CD4-positive, alpha-beta memory T cell (primary cell): ENCODE measurements at regions of chr6 and their contacts with region 1.

Region 1: DNA sequence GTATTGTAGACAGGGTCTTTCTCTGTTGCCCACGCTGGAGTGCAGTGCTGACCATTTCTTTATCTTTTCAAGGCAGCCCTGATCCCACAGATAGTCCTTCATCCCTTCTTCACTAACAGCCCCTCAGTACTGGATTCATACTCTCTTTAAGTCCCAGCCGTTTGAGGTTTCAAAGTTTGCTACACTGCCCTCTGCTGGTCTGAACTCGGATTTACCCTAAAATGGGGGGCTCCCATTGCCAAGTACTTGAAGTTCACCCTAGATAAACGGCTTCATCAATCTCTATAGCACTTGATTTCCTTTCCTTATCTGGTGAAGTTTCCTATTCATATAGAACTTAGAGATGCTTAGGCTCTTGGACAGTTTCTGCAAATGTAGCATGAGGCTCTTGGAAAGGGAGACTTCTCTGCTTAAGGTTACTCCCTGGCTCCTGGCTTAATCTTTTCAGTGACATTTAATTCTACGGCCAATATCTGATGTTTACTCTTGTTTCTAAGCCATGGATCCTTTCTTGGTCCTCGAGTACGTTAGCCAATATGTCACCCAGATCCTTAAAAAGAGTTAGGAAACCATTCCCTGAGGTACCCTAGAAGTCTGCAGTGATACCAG is 21.4 kb upstream of the PREP start:
- DNase-seq: peak; percentile 40 to 55 (median 49)
- H3K4me3 ChIP-seq: no peak overlapping the region
- H3K4me3 Mint-ChIP-seq: no peak overlapping the region
- H3K27ac ChIP-seq: no peak overlapping the region
- H3K27ac Mint-ChIP-seq: peak overlapping the region in 1 of 7 donors; percentile 14
- H3K4me1 ChIP-seq: no peaks in the 10 kb centered on the region
- H3K4me1 Mint-ChIP-seq: peaks cover 0 to 4% (median 2%) of the 10 kb centered on the region in 4 donors
- H3K27me3 ChIP-seq: no peaks in the 10 kb centered on the region
- H3K27me3 Mint-ChIP-seq: no peaks in the 10 kb centered on the region

Region 2: GRCh38 chr6:105087571-105088211 is 336.6 kb before region 1 on chr6:
- CTCF ChIA-PET with region 1: interaction called, 39 read pairs
- POLR2A ChIA-PET with region 1: no interaction called
- intact Hi-C with region 1: no loop called
- DNase-seq: peak in 4 of 5 donors; percentile 18 to 35 (median 25)
- H3K4me3 ChIP-seq: no peak overlapping the region
- H3K4me3 Mint-ChIP-seq: no peak overlapping the region
- H3K27ac ChIP-seq: no peak overlapping the region
- H3K27ac Mint-ChIP-seq: no peak overlapping the region
- H3K4me1 ChIP-seq: no peaks in the 10 kb centered on the region
- H3K4me1 Mint-ChIP-seq: no peaks in the 10 kb centered on the region
- H3K27me3 ChIP-seq: no peaks in the 10 kb centered on the region
- H3K27me3 Mint-ChIP-seq: peaks cover 1 to 2% of the 10 kb centered on the region in 2 donors

Region 3: GRCh38 chr6:105317607-105318533 is 106.4 kb before region 1 on chr6:
- CTCF ChIA-PET with region 1: no interaction called
- POLR2A ChIA-PET with region 1: no interaction called
- intact Hi-C with region 1: loop called (anchors 5 kb)
- DNase-seq: no peak
- H3K4me3 ChIP-seq: no peak overlapping the region
- H3K4me3 Mint-ChIP-seq: no peak overlapping the region
- H3K27ac ChIP-seq: no peak overlapping the region
- H3K27ac Mint-ChIP-seq: peak overlapping the region in 1 of 7 donors; percentile 10
- H3K4me1 ChIP-seq: no peaks in the 10 kb centered on the region
- H3K4me1 Mint-ChIP-seq: peaks cover 0 to 4% (median 1%) of the 10 kb centered on the region in 4 donors
- H3K27me3 ChIP-seq: no peaks in the 10 kb centered on the region
- H3K27me3 Mint-ChIP-seq: no peaks in the 10 kb centered on the region

Region 4: GRCh38 chr6:106591111-106591825 is 1167.0 kb after region 1 on chr6:
- CTCF ChIA-PET with region 1: no interaction called
- POLR2A ChIA-PET with region 1: no interaction called
- intact Hi-C with region 1: no loop called
- DNase-seq: no peak
- H3K4me3 ChIP-seq: no peak overlapping the region
- H3K4me3 Mint-ChIP-seq: no peak overlapping the region
- H3K27ac ChIP-seq: no peak overlapping the region
- H3K27ac Mint-ChIP-seq: no peak overlapping the region
- H3K4me1 ChIP-seq: no peaks in the 10 kb centered on the region
- H3K4me1 Mint-ChIP-seq: no peaks in the 10 kb centered on the region
- H3K27me3 ChIP-seq: no peaks in the 10 kb centered on the region
- H3K27me3 Mint-ChIP-seq: no peaks in the 10 kb centered on the region